Activated naive CD4-positive, alpha-beta T cell treated with anti-CD3 and anti-CD28 coated beads, Interleukin-2, amount 10 ng/mL, durations not matched to agents 7 days and 5 days (primary cell): ENCODE measurements at regions of chr18 and their contacts with region 1.

Region 1: DNA sequence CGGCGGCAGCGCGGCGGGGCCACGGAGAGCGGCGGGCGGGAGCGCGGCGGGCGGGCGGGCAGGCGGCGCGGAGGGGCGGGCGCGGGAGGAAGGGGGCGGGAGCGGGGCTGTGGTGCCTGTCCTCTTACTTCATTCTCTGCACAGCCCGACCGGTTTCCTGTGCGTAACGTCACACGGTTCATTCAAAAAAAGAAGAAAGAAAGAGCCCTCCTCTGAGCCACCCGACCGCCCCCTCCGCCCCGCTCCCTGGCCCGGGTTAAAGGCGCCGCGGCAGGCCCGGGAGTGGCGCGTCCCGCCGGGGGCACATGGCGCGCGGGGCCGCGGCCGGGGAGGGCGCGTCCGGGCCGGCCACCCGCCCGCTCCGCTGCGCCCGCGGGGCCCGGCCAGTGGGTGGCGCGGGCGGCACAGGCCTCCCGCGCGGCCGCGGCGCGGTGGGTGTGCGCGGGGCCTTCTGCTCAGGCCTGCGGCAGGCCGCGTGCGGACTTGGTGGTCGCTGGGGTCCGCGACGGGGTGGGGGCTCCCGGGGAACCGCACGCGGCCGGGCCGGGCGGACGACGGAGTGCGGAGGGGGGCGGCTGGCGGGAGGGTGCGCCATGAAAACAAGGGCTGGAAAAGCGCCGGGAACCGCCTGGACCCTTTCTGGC is 599 bp upstream of the BCL2 start:
- DNase-seq: peak; percentile 93
- H3K4me3 Mint-ChIP-seq: peak overlapping the region; percentile 85
- H3K27ac Mint-ChIP-seq: peak overlapping the region; percentile 89
- H3K4me1 Mint-ChIP-seq: peaks cover 25% of the 10 kb centered on the region
- H3K27me3 Mint-ChIP-seq: peaks cover 4% of the 10 kb centered on the region

Region 2: DNA sequence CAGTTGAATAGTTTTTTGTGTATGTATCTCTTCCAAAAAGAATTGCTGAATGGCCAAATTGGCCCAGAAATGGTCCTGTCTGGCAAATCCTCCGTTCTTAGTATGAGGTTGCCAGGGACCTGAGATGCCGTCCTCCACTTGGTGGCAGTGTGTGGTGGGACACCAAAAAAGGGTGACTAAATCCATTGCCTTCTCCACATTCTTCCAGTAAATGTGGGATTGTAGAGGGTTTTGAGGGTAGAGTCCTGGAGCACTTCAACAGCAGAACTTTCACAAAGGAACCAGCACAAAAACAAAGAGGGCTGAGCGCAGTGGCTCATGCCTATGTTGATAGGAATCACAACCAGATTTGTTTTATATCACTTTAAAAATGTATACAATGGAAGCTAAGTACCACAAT is 200.5 kb before region 1 on chr18:
- CTCF ChIA-PET with region 1: interaction called, 12 read pairs
- DNase-seq: peak; percentile 49
- H3K4me3 Mint-ChIP-seq: no peak overlapping the region
- H3K27ac Mint-ChIP-seq: no peak overlapping the region
- H3K4me1 Mint-ChIP-seq: peaks cover 10% of the 10 kb centered on the region
- H3K27me3 Mint-ChIP-seq: peaks cover 45% of the 10 kb centered on the region

Region 3: DNA sequence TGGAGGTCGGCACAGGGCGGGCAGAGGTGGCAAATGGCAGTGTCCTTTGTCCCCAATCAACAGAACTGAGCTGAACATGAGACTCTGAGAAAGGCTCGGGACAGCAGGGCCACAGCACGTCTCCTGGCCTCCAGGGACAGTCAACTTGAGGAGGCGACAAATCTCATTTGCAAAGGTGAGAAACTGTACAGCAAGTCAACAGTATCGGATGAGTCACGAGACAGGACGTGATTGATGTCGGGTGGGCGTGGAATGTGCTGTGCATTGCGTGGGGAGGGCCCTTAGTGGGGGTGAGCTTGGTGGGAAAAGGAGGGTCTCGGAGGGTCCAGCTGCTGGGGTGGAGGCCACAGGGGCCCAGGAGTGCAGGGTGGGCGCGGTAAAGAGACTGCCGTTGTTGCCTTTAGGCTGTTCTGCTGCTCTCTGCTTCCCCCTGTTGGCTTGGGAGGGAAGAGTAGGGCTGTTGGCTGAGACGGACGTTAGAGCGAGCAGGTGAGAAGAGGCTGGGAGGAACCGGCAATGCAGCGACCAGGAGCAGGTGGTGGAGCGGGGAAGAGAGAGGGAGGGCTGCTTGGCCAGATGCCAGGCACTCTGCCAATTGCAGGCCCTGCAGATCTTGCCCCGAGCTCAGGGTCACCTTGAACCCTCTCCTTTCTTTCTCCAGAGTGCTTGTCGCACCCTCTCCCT is 164.9 kb before region 1 on chr18:
- CTCF ChIA-PET with region 1: interaction called, 45 read pairs
- DNase-seq: peak; percentile 89
- H3K4me3 Mint-ChIP-seq: peak overlapping the region; percentile 78
- H3K27ac Mint-ChIP-seq: peak overlapping the region; percentile 93
- H3K4me1 Mint-ChIP-seq: peaks cover 99% of the 10 kb centered on the region
- H3K27me3 Mint-ChIP-seq: no peaks in the 10 kb centered on the region

Region 4: GRCh38 chr18:63199743-63200241 is 120.4 kb before region 1 on chr18:
- CTCF ChIA-PET with region 1: interaction called, 18 read pairs
- DNase-seq: peak; percentile 60
- H3K4me3 Mint-ChIP-seq: no peak overlapping the region
- H3K27ac Mint-ChIP-seq: no peak overlapping the region
- H3K4me1 Mint-ChIP-seq: peaks cover 48% of the 10 kb centered on the region
- H3K27me3 Mint-ChIP-seq: no peaks in the 10 kb centered on the region

Region 5: GRCh38 chr18:63299837-63300745 is 20.1 kb before region 1 on chr18:
- CTCF ChIA-PET with region 1: interaction called, 25 read pairs
- DNase-seq: peak; percentile 49
- H3K4me3 Mint-ChIP-seq: peak overlapping the region; percentile 31
- H3K27ac Mint-ChIP-seq: peak overlapping the region; percentile 87
- H3K4me1 Mint-ChIP-seq: peaks cover 88% of the 10 kb centered on the region
- H3K27me3 Mint-ChIP-seq: no peaks in the 10 kb centered on the region

Region 6: DNA sequence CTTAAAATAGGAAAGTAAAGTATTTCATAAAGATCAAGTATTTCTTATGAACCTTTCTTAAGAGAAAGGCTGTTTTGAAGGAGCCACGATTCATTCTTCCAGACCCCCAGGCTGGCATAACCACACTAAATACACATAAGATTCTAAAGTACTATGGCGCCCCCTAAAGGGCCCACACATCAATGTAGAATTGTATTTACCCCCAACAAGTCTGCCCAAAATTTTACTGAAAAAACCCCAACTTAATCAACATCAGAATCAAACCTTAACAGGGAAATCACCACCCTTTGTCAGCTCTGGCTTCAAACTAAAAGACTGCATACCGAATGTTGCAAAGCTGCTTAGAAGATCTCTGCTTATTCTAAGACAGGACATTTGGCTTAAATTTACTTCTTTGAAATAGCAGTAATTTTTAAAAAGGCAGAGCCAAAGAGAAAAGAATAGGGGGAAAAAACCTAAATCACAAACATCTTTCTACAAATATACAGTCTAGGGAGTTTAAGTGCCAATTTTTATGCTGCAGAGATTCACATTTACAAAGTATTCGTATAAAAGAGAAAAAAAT is 19.8 kb after region 1 on chr18:
- CTCF ChIA-PET with region 1: interaction called, 18 read pairs
- DNase-seq: peak; percentile 66
- H3K4me3 Mint-ChIP-seq: no peak overlapping the region
- H3K27ac Mint-ChIP-seq: no peak overlapping the region
- H3K4me1 Mint-ChIP-seq: no peaks in the 10 kb centered on the region
- H3K27me3 Mint-ChIP-seq: no peaks in the 10 kb centered on the region

Region 7: DNA sequence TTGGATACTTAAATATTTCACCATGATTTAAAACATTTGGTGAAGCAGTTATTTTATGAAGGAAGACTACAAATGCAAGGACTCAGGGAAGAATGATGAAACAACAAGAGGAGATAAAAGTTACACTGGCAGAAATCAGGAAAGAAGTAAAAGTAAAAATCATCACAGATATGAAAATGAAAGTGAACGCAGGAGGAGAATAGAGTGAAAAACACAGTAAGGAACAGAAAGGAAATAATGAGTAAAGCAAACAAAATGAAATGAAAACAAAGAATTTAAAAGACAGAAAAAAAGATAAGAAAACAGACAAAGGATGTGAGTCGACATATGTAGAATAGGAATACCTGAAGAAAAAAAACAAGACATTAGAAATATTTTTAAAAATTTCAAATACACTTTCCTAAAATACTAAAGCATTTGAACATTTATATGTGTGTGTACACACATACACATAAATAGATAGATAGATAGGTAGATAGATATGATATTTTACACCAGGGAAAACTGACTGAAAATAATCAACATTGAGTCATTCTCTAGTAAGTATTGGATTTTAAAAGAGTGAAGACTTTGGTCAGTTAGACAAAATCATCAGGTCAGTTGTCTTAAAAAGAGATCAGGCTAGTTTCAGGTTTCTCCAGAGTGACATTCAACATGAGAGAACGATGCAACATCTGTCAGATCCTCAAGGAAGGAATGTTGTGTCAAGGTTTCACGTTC is 58.9 kb after region 1 on chr18:
- CTCF ChIA-PET with region 1: no interaction called
- DNase-seq: no peak
- H3K4me3 Mint-ChIP-seq: peak overlapping the region; percentile 48
- H3K27ac Mint-ChIP-seq: peak overlapping the region; percentile 86
- H3K4me1 Mint-ChIP-seq: peaks cover 40% of the 10 kb centered on the region
- H3K27me3 Mint-ChIP-seq: no peaks in the 10 kb centered on the region

Region 8: DNA sequence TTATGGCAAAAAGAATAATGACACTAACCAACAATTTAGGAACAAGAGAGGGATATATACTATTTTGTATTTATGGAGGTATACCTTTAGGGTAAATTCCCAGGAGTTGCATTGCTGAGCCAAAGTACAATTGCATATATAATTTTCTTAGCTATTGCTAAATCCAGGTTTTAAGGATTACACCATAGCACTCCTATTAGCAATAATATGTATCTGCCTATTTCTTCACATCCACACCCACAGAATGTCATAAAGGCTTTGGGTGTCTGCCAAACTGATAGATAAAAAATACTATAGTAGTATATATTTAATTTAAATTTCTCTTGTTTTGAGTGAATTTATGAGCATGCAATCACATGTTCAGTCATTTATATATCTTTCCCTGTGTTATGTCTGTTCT is 255.5 kb after region 1 on chr18:
- CTCF ChIA-PET with region 1: no interaction called
- DNase-seq: no peak
- H3K4me3 Mint-ChIP-seq: no peak overlapping the region
- H3K27ac Mint-ChIP-seq: no peak overlapping the region
- H3K4me1 Mint-ChIP-seq: no peaks in the 10 kb centered on the region
- H3K27me3 Mint-ChIP-seq: peaks cover 4% of the 10 kb centered on the region